Endothelial cell of umbilical vein (primary cell): ENCODE measurements at regions of chr18 and their contacts with region 1.

Region 1: GRCh38 chr18:56083097-56083521 is 495.1 kb upstream of the TCF4 start:
- DNase-seq: peak; percentile 99
- H3K4me3 ChIP-seq: no peak overlapping the region
- H3K27ac ChIP-seq: peak overlapping the region; percentile 95
- H3K4me1 ChIP-seq: peaks cover 26% of the 10 kb centered on the region
- H3K27me3 ChIP-seq: no peaks in the 10 kb centered on the region
- CTCF ChIP-seq: peak; percentile 24 to 46
- POLR2A ChIP-seq: peak; percentile 71

Region 2: GRCh38 chr18:55328301-55328700 is 754.8 kb before region 1 on chr18:
- CTCF ChIA-PET with region 1: no interaction called
- POLR2A ChIA-PET with region 1: no interaction called
- dilution Hi-C with region 1: no loop called
- intact Hi-C with region 1: loop called (anchors 2 kb)
- DNase-seq: peak; percentile 96
- H3K4me3 ChIP-seq: peak overlapping the region in 1 of 3 experiments; percentile 19
- H3K27ac ChIP-seq: peak overlapping the region; percentile 92
- H3K4me1 ChIP-seq: peaks cover 69% of the 10 kb centered on the region
- H3K27me3 ChIP-seq: no peaks in the 10 kb centered on the region
- CTCF ChIP-seq: no peak
- POLR2A ChIP-seq: peak; percentile 36

Region 3: DNA sequence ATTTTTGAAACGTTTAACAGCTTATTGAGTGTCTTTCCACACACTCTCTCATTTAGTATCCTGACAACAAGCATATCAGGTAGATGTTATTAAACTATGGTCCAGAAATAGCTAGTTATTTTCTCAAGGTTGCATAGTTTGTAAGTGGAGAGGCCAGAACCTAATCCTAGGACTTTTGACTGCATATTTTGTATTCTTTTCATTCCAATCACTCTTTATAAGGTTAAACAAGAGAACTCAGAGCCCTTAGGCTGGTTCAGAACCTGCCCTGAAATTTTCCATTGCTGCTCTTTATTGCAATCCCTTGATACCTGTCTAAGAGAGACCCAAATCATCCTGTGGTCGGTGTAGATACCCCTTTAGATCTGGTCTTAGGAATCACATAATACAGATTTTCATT is 122.5 kb before region 1 on chr18:
- CTCF ChIA-PET with region 1: no interaction called
- POLR2A ChIA-PET with region 1: no interaction called
- dilution Hi-C with region 1: no loop called
- intact Hi-C with region 1: no loop called
- DNase-seq: no peak
- H3K4me3 ChIP-seq: no peak overlapping the region
- H3K27ac ChIP-seq: no peak overlapping the region
- H3K4me1 ChIP-seq: no peaks in the 10 kb centered on the region
- H3K27me3 ChIP-seq: no peaks in the 10 kb centered on the region
- CTCF ChIP-seq: no peak
- POLR2A ChIP-seq: no peak

Region 4: GRCh38 chr18:55988537-55988936 is 94.6 kb before region 1 on chr18:
- CTCF ChIA-PET with region 1: no interaction called
- POLR2A ChIA-PET with region 1: no interaction called
- dilution Hi-C with region 1: no loop called
- intact Hi-C with region 1: loop called (anchors 1 kb)
- DNase-seq: peak; percentile 94
- H3K4me3 ChIP-seq: no peak overlapping the region
- H3K27ac ChIP-seq: peak overlapping the region; percentile 81
- H3K4me1 ChIP-seq: peaks cover 10% of the 10 kb centered on the region
- H3K27me3 ChIP-seq: no peaks in the 10 kb centered on the region
- CTCF ChIP-seq: no peak
- POLR2A ChIP-seq: no peak

Region 5: GRCh38 chr18:56124186-56124585 is 41.1 kb after region 1 on chr18:
- CTCF ChIA-PET with region 1: no interaction called
- POLR2A ChIA-PET with region 1: no interaction called
- dilution Hi-C with region 1: no loop called
- intact Hi-C with region 1: no loop called
- DNase-seq: peak; percentile 75
- H3K4me3 ChIP-seq: no peak overlapping the region
- H3K27ac ChIP-seq: no peak overlapping the region
- H3K4me1 ChIP-seq: peaks cover 6% of the 10 kb centered on the region
- H3K27me3 ChIP-seq: no peaks in the 10 kb centered on the region
- CTCF ChIP-seq: no peak
- POLR2A ChIP-seq: no peak

Region 6: GRCh38 chr18:56139372-56139771 is 56.3 kb after region 1 on chr18:
- CTCF ChIA-PET with region 1: no interaction called
- POLR2A ChIA-PET with region 1: no interaction called
- dilution Hi-C with region 1: no loop called
- intact Hi-C with region 1: no loop called
- DNase-seq: no peak
- H3K4me3 ChIP-seq: no peak overlapping the region
- H3K27ac ChIP-seq: no peak overlapping the region
- H3K4me1 ChIP-seq: no peaks in the 10 kb centered on the region
- H3K27me3 ChIP-seq: no peaks in the 10 kb centered on the region
- CTCF ChIP-seq: no peak
- POLR2A ChIP-seq: no peak

Region 7: GRCh38 chr18:56291294-56291693 is 208.2 kb after region 1 on chr18:
- CTCF ChIA-PET with region 1: no interaction called
- POLR2A ChIA-PET with region 1: no interaction called
- dilution Hi-C with region 1: no loop called
- intact Hi-C with region 1: loop called (anchors 1 kb)
- DNase-seq: peak; percentile 83
- H3K4me3 ChIP-seq: no peak overlapping the region
- H3K27ac ChIP-seq: peak overlapping the region; percentile 46
- H3K4me1 ChIP-seq: peaks cover 24% of the 10 kb centered on the region
- H3K27me3 ChIP-seq: no peaks in the 10 kb centered on the region
- CTCF ChIP-seq: no peak
- POLR2A ChIP-seq: no peak

Region 8: GRCh38 chr18:56443166-56443907 is 360.2 kb after region 1 on chr18:
- CTCF ChIA-PET with region 1: no interaction called
- POLR2A ChIA-PET with region 1: no interaction called
- dilution Hi-C with region 1: no loop called
- intact Hi-C with region 1: loop called (anchors 5 kb)
- DNase-seq: peak; percentile 72
- H3K4me3 ChIP-seq: no peak overlapping the region
- H3K27ac ChIP-seq: peak overlapping the region; percentile 15
- H3K4me1 ChIP-seq: peaks cover 9% of the 10 kb centered on the region
- H3K27me3 ChIP-seq: no peaks in the 10 kb centered on the region
- CTCF ChIP-seq: no peak
- POLR2A ChIP-seq: no peak